ENCODE measurements at regions of chr6 and their contacts with region 1.

Region 1: GRCh38 chr6:39834278-39834677 is 42.1 kb downstream of the DAAM2 start:
- DNase-seq: no peak
- H3K4me3 ChIP-seq: no peak overlapping the region
- H3K27ac ChIP-seq: peak overlapping the region; percentile 75 to 87 (median 78)
- H3K4me1 ChIP-seq: peaks cover 34 to 100% (median 97%) of the 10 kb centered on the region in 4 donors
- H3K27me3 ChIP-seq: no peaks in the 10 kb centered on the region
- CTCF ChIP-seq: no peak
- EP300 ChIP-seq: no peak
- POLR2A ChIP-seq: no peak

Region 2: DNA sequence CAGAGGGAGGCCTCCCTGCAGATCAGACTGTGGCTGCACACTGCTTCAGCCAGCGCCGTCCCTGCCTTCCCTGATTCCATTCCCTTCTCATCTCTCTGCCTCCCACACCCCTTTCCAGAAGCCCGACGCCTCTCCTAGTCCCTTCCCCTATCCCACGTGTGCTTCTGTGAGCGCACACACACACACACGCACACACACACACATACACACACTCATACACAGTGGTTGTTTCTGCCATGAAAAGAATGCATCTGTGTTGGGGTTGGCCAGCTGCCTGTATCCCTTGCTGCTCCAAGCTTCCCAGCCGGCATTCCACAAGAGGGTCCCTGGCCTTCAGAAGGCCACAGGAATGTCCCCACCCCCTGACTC is 48.2 kb after region 1 on chr6:
- intact Hi-C with region 1: loop called (anchors 5 kb)
- DNase-seq: no peak
- H3K4me3 ChIP-seq: no peak overlapping the region
- H3K27ac ChIP-seq: peak overlapping the region; percentile 83 to 86 (median 84)
- H3K4me1 ChIP-seq: peaks cover 26 to 95% (median 85%) of the 10 kb centered on the region in 4 donors
- H3K27me3 ChIP-seq: no peaks in the 10 kb centered on the region
- CTCF ChIP-seq: no peak
- EP300 ChIP-seq: no peak
- POLR2A ChIP-seq: no peak

Region 3: DNA sequence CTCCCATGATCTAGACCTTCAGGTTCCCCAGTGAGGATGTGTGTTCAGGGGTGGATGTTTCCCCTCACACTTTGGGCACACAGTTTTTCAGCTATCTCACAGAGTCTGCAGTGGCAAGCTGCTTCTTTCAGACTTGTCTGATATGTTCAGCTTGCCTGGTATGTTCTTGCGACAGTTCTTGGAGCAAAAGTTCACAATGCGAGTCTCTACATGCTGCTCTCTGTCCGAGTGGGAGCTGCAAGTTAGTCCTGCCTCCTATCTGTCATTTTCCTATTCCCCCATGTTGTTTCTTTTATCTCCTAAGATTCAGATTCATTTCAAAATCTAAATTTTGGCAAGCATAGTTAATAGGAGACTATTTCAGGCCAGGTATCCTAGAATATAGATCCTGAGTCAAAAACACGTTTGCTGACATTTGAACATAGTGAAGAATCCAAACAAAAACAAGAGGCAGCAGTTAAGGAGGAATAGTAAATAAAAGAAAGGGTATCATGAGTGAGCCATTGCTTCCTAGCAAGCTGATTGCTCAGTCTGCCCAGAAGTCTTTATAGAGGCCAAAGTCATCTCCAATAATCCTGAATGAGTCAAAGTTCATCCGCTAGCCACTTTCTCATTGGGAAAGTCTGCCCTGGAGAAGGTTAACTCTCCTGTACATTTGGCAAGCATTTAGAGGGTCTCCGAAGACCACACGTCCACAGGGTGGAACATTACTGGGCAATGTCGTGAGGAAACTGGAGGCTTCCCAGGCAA is 240.2 kb after region 1 on chr6:
- intact Hi-C with region 1: no loop called
- DNase-seq: no peak
- H3K4me3 ChIP-seq: no peak overlapping the region
- H3K27ac ChIP-seq: no peak overlapping the region
- H3K4me1 ChIP-seq: no peaks in the 10 kb centered on the region
- H3K27me3 ChIP-seq: peaks cover 0 to 43% (median 0%) of the 10 kb centered on the region in 4 donors
- CTCF ChIP-seq: no peak
- EP300 ChIP-seq: no peak
- POLR2A ChIP-seq: no peak

Measured in esophagus muscularis mucosa (tissue), 4 donors.